OCI-LY7 (cell line): ENCODE measurements at regions of chr11 and their contacts with region 1.

Region 1: GRCh38 chr11:16160146-16160545 is 196.2 kb downstream of the SOX6 start:
- DNase-seq: no peak
- H3K4me3 ChIP-seq: no peak overlapping the region
- H3K27ac ChIP-seq: no peak overlapping the region
- H3K4me1 ChIP-seq: no peaks in the 10 kb centered on the region
- CTCF ChIP-seq: no peak

Region 2: DNA sequence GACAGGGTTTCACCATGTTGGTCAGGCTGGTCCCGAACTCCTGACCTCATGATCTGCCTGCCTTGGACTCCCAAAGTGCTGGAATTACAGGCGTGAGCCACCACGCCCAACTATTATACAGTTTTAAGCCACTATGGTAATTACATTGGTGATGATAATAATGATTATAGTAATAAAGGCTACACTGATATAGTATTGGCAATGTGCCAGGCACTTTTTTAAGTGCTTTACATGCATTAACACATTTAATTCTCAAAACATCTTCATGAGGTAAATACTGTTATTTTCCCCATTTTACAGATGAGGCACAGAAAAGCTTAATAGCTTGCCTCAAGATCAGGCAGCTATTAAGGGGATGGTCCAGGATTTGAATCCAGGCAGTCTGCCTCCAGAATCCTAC is 26.3 kb before region 1 on chr11:
- CTCF ChIA-PET with region 1: no interaction called
- POLR2A ChIA-PET with region 1: no interaction called
- intact Hi-C with region 1: loop called (anchors 1 kb)
- DNase-seq: no peak
- H3K4me3 ChIP-seq: no peak overlapping the region
- H3K27ac ChIP-seq: no peak overlapping the region
- H3K4me1 ChIP-seq: no peaks in the 10 kb centered on the region
- CTCF ChIP-seq: no peak